Posterior cingulate gyrus (tissue), 11 donors: ENCODE measurements at regions of chr16 and their contacts with region 1.

Region 1: DNA sequence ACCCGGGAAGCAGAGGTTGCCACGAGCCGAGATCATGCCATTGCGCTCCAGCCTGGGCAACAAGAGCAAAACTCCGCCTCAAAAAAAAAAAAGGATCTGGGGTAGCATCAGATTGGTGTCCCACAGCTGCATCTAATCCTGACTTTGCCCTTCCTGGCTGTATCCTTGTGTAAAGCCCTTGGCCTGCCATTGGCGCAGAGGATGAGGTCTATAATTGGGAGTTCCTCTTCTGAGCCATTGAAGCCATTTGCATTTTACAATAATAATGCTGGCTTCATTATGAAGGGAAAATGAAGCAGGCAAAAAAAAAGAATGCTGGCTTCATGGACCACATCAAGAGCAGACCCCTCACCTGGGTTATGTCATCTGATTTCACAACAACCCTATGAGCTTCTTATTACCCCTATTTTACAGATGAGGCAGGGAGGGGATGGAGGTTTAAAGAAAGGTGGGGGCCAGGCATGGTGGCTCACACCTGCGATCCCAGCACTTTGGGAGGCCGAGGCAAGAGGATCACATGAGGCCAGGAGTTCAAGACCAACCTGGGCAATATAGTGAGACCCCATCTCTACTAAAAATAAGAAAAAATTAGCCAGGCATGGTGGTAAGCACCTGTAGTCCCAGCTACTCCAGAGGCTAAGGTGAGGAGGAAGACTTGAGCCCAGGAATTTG is 1.2 kb upstream of the LITAFD start:
- DNase-seq: peak in 3 of 10 donors; percentile 4 to 25 (median 24)

Region 2: GRCh38 chr16:8567750-8568617 is 313.0 kb before region 1 on chr16:
- intact Hi-C with region 1: loop called (anchors 1 kb)
- DNase-seq: peak; percentile 32 to 95 (median 74)

Region 3: GRCh38 chr16:8660841-8661301 is 220.1 kb before region 1 on chr16:
- intact Hi-C with region 1: loop called (anchors 1 kb)
- DNase-seq: peak; percentile 52 to 96 (median 67)